ENCODE measurements at regions of chr2 and their contacts with region 1.

Region 1: GRCh38 chr2:61340242-61340641 is 130.6 kb downstream of the USP34 start:
- DNase-seq: no peak
- H3K4me3 ChIP-seq: no peak overlapping the region
- H3K27ac ChIP-seq: no peak overlapping the region
- H3K4me1 ChIP-seq: no peaks in the 10 kb centered on the region
- H3K27me3 ChIP-seq: no peaks in the 10 kb centered on the region
- CTCF ChIP-seq: no peak
- POLR2A ChIP-seq: no peak

Region 2: DNA sequence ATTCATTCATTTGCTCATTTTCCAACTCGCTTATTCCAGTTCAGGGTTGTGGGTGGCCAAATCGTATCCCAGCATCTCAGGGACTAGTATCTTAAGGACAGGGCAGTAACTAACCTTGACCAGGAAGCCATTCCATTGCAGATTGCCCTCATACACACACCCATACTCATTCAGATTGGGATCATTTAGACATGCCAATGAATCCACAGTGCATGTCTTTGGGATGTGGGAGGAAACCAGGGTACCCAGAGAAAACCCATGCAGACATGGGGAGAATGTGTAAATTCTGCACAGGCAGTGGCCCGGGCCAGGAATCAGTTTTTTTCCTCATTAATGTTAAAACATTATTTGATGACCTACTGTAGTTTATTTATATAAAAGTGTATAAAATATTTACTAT is 20.1 kb before region 1 on chr2:
- intact Hi-C with region 1: loop called (anchors 1 kb)
- DNase-seq: no peak
- H3K4me3 ChIP-seq: no peak overlapping the region
- H3K27ac ChIP-seq: no peak overlapping the region
- H3K4me1 ChIP-seq: no peaks in the 10 kb centered on the region
- H3K27me3 ChIP-seq: no peaks in the 10 kb centered on the region
- CTCF ChIP-seq: no peak
- POLR2A ChIP-seq: no peak